Common myeloid progenitor, CD34-positive (primary cell): ENCODE measurements at regions of chr6 and their contacts with region 1.

Region 1: DNA sequence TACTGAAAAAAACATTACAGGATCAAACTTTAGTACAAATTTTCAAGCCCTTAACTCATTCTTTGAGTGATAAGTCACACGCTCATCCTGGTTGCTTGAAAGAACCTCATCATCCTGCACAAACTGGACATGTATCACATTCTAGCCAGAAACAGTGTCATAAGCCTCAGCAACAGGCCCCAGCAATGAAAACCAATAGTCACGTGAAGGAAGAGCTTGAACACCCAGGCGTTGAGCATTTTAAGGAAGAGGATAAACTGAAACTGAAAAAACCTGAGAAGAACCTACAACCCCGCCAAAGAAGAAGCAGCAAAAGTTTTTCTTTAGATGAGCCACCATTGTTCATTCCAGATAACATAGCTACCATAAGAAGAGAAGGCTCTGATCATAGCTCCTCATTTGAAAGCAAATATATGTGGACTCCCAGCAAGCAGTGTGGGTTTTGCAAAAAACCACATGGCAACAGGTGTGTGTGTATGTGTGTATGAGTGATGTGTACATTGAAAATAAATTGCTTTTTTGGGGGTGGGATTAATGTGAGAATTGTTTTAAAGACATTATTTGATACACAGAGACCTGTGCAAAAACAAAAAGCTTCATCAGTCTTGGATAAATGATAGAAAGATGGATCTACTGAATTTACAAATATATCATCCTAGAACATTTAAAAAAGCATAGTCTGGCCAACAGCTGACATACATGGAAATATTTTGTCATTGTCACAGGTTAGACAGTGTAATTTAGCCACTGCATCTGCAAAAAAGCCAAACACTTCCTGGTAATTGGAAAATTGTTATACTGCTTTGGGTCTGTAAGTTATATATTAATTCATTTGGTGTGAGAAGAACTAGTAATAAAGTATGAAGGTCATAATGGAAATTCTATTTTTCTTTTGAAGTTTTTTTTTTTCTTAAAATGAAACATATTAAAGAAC is 50.1 kb downstream of the PHF3 start:
- DNase-seq: peak in 1 of 3 donors; percentile 22
- H3K4me3 ChIP-seq: no peak overlapping the region
- H3K27ac ChIP-seq: peak overlapping the region in 1 of 2 experiments; percentile 16
- H3K4me1 ChIP-seq: peaks cover 0 to 18% (median 10%) of the 10 kb centered on the region in 4 experiments
- H3K27me3 ChIP-seq: no peaks in the 10 kb centered on the region

Region 2: GRCh38 chr6:63049196-63049595 is 636.5 kb before region 1 on chr6:
- CTCF ChIA-PET with region 1: no interaction called
- POLR2A ChIA-PET with region 1: no interaction called
- DNase-seq: no peak
- H3K4me3 ChIP-seq: no peak overlapping the region
- H3K27ac ChIP-seq: no peak overlapping the region
- H3K4me1 ChIP-seq: no peaks in the 10 kb centered on the region
- H3K27me3 ChIP-seq: no peaks in the 10 kb centered on the region

Region 3: DNA sequence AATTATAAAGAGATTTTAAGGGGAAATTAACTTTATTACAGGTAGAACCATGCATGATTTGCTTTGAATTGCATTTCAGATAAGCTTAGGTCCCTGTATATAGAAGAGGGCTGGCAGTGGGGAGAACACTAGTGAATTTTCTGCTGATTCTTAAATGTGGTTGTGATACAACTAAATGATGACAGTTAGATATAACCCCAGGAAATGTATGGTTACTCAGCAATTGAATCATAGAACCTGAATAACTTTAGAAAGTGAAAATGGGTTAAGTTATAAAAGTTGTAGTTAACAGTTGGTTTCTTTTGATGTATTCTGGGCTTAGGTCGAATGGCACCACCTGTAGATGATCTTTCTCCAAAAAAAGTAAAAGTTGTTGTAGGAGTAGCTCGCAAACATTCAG is 20.0 kb after region 1 on chr6:
- CTCF ChIA-PET with region 1: interaction called, 15 read pairs
- POLR2A ChIA-PET with region 1: no interaction called
- DNase-seq: no peak
- H3K4me3 ChIP-seq: no peak overlapping the region
- H3K27ac ChIP-seq: no peak overlapping the region
- H3K4me1 ChIP-seq: no peaks in the 10 kb centered on the region
- H3K27me3 ChIP-seq: no peaks in the 10 kb centered on the region

Region 4: DNA sequence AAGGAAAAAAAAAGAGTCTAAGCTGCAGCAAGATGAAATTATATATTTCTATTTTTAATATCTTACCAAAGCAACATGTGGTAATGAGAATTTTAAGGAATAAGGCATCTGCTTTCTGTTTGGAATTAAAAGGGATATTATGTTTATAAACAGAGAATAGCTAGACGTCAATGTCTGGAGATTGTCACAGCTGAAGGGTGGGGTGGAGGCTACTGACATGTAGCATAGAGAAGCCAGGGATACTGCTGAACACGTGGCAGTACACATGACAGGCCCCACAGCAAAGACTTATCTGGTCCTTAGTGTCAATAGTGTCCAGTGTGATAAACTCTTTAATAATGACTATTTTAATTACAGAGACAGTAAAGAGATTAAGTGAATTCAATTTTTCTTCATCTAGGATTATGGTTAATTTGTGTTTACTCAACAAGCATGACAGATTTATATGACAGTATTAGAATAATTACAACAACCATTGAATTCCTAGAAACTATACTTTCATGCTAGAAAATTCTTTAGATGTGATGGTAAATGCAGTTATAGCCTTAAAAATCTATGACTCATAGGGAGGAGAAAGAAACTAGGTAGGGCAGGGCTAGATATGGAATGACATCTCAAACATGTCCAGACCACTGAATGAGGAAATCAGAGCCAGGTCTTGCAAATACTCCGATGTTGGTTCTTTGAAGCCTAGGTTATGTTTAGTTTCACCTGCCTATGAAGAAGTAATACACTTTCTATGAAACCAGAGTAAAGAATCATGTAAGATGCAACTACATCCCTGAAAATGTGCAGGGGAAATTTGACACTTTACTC is 349.3 kb after region 1 on chr6:
- CTCF ChIA-PET with region 1: no interaction called
- POLR2A ChIA-PET with region 1: no interaction called
- DNase-seq: no peak
- H3K4me3 ChIP-seq: no peak overlapping the region
- H3K27ac ChIP-seq: no peak overlapping the region
- H3K4me1 ChIP-seq: no peaks in the 10 kb centered on the region
- H3K27me3 ChIP-seq: no peaks in the 10 kb centered on the region